Activated CD8-positive, alpha-beta T cell treated with anti-CD3 and anti-CD28 coated beads for 36 hours (primary cell): ENCODE measurements at regions of chr5 and their contacts with region 1.

Region 1: DNA sequence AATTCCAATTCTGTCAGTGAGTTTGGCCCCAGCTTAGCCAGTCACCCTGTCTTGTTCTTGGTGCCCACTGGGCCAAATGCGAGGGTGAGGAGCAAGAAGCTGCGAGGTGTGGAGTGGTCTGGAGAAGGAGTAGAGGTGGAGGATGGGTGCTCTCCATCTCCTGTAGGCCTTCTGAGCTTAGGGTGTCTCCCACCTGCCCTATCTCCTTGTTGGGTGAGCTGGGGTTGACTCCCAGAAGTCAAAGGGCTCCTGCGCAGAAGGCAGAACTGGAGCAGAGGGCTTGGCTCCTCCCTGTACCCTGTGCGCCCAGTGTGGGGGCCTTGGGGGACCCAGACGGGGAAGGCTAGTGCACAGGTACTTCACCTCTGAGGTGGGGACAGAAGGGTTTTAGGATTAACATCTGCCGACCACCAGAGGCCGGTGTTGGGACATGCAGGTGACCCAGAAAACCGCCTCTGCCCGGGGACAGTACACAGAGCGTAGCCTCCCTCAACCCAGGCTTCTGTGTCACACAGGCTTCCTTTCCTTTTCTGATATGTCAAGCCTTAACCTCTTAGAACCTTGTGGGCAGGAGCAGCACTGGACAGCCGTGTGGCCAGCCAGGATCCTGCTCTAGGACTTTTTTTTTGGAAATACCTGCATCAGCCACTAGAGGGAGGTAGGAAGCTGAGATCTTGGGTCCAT is 16.9 kb downstream of the IL5 start:
- DNase-seq: peak; percentile 57
- ATAC-seq: peak; percentile 57
- H3K4me3 Mint-ChIP-seq: no peak overlapping the region
- H3K27ac Mint-ChIP-seq: peak overlapping the region; percentile 51
- H3K4me1 Mint-ChIP-seq: peaks cover 42% of the 10 kb centered on the region
- H3K27me3 Mint-ChIP-seq: peaks cover 2% of the 10 kb centered on the region
- CTCF ChIP-seq: peak; percentile 98

Region 2: GRCh38 chr5:132495667-132496190 is 30.7 kb before region 1 on chr5:
- CTCF ChIA-PET with region 1: interaction called, 18 read pairs
- POLR2A ChIA-PET with region 1: interaction called, 3 read pairs
- intact Hi-C with region 1: no loop called
- DNase-seq: peak; percentile 94
- ATAC-seq: peak; percentile 60
- H3K4me3 Mint-ChIP-seq: peak overlapping the region; percentile 90
- H3K27ac Mint-ChIP-seq: peak overlapping the region; percentile 99
- H3K4me1 Mint-ChIP-seq: peaks cover 67% of the 10 kb centered on the region
- H3K27me3 Mint-ChIP-seq: no peaks in the 10 kb centered on the region
- CTCF ChIP-seq: no peak

Region 3: DNA sequence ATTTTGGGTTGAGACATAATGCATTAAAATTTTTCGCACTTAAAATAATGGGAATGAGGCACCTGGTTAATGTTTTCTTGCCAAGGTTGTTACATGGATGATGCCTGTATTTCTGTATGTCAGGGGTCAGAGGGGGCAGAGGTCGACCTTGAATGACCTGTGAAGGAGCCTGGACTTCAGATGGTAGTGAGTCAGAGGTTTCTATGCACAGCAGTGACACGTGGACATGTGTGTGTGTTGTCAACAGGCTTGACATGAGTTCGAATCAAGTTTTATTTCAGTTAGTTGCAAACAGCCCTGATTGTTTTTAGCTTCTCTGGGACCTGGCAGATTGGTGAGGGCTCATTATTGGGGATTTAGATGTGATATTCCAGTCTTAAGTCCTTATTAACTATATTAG is 13.3 kb after region 1 on chr5:
- CTCF ChIA-PET with region 1: interaction called, 47 read pairs
- POLR2A ChIA-PET with region 1: interaction called, 3 read pairs
- intact Hi-C with region 1: no loop called
- DNase-seq: no peak
- ATAC-seq: no peak
- H3K4me3 Mint-ChIP-seq: no peak overlapping the region
- H3K27ac Mint-ChIP-seq: no peak overlapping the region
- H3K4me1 Mint-ChIP-seq: peaks cover 9% of the 10 kb centered on the region
- H3K27me3 Mint-ChIP-seq: peaks cover 20% of the 10 kb centered on the region
- CTCF ChIP-seq: no peak

Region 4: GRCh38 chr5:132566657-132567056 is 40.2 kb after region 1 on chr5:
- CTCF ChIA-PET with region 1: interaction called, 18 read pairs
- POLR2A ChIA-PET with region 1: no interaction called
- intact Hi-C with region 1: no loop called
- DNase-seq: no peak
- ATAC-seq: no peak
- H3K4me3 Mint-ChIP-seq: no peak overlapping the region
- H3K27ac Mint-ChIP-seq: peak overlapping the region; percentile 1
- H3K4me1 Mint-ChIP-seq: peaks cover 40% of the 10 kb centered on the region
- H3K27me3 Mint-ChIP-seq: no peaks in the 10 kb centered on the region
- CTCF ChIP-seq: no peak

Region 5: DNA sequence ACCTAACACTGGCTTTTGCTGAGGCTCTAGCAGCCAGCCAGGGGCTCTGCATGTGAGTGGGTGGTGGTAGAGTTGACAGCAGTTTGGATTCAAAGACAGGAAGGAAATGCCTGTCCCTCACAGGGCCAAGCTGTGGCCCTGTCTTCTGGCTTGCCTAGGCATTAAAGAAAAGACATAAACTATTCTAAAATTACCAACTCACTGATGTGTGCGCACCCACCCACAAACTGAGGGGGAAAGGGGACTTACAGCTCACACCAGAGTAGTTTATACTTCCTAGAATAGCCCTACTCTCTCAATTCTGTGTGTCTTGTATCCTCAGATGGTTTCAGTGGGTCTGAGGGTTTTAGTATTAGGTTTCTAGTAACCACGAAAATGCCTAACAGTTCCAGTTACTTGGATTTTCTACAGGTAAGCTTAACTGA is 113.3 kb after region 1 on chr5:
- CTCF ChIA-PET with region 1: interaction called, 41 read pairs
- POLR2A ChIA-PET with region 1: interaction called, 4 read pairs
- intact Hi-C with region 1: loop called (anchors 5 kb)
- DNase-seq: peak; percentile 85
- ATAC-seq: peak; percentile 67
- H3K4me3 Mint-ChIP-seq: no peak overlapping the region
- H3K27ac Mint-ChIP-seq: peak overlapping the region; percentile 93
- H3K4me1 Mint-ChIP-seq: peaks cover 83% of the 10 kb centered on the region
- H3K27me3 Mint-ChIP-seq: no peaks in the 10 kb centered on the region
- CTCF ChIP-seq: no peak

Region 6: DNA sequence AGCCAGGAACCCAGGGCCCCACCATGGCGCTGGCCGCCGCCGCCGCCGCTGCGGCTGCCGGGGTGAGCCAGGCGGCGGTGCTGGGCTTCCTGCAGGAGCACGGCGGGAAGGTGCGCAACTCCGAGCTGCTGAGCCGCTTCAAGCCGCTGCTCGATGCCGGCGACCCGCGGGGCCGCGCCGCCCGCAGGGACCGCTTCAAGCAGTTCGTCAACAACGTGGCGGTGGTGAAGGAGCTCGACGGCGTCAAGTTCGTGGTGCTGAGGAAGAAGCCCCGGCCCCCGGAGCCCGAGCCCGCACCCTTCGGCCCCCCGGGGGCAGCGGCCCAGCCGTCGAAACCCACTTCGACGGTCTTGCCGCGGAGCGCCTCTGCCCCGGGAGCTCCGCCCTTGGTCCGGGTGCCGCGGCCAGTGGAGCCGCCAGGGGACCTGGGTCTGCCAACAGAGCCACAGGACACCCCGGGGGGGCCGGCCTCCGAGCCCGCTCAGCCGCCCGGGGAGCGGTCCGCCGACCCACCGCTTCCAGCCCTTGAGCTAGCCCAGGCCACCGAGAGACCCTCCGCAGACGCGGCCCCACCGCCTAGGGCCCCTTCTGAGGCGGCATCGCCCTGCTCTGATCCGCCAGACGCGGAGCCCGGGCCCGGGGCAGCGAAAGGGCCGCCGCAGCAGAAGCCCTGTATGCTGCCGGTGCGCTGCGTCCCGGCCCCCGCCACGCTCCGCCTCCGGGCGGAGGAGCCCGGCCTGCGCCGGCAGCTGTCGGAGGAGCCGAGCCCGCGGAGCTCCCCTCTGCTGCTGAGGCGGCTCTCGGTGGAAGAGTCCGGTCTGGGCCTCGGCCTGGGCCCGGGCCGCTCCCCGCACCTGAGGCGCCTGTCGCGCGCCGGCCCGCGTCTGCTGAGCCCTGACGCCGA is 287.4 kb after region 1 on chr5:
- CTCF ChIA-PET with region 1: interaction called, 62 read pairs
- POLR2A ChIA-PET with region 1: no interaction called
- intact Hi-C with region 1: no loop called
- DNase-seq: peak; percentile 44
- ATAC-seq: peak; percentile 62
- H3K4me3 Mint-ChIP-seq: peak overlapping the region; percentile 37
- H3K27ac Mint-ChIP-seq: no peak overlapping the region
- H3K4me1 Mint-ChIP-seq: peaks cover 7% of the 10 kb centered on the region
- H3K27me3 Mint-ChIP-seq: peaks cover 48% of the 10 kb centered on the region
- CTCF ChIP-seq: no peak

Region 7: DNA sequence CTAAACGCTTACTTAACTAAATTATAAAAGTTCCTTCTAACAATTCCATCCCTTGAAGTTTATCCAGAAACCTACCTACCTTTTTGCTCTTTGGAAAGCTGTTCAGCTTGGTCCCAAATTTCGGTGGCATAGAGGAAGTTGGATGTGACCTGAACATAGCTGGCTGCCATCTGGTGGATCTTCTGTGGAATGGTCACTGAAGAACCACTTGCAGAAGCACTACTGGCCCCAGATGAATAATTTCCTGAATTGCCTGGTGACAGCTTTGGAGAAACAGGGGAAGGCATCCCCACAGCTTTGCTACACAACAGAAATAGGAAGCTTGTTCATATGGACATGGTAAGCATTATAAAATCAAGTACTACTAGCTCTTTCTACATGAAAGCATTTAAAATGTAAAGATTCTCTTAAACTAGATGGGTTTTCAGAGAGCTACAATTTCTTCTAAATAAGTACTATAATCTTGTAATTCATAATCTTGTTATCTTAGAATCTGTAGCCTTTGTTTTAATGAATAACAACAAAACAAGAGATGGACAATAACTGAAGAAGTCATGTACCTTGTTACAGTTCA is 356.9 kb after region 1 on chr5:
- CTCF ChIA-PET with region 1: interaction called, 11 read pairs
- POLR2A ChIA-PET with region 1: no interaction called
- intact Hi-C with region 1: no loop called
- DNase-seq: peak; percentile 25
- ATAC-seq: peak; percentile 67
- H3K4me3 Mint-ChIP-seq: no peak overlapping the region
- H3K27ac Mint-ChIP-seq: no peak overlapping the region
- H3K4me1 Mint-ChIP-seq: peaks cover 5% of the 10 kb centered on the region
- H3K27me3 Mint-ChIP-seq: no peaks in the 10 kb centered on the region
- CTCF ChIP-seq: peak; percentile 53